ENCODE measurements at regions of chr16 and their contacts with region 1.

Region 1: DNA sequence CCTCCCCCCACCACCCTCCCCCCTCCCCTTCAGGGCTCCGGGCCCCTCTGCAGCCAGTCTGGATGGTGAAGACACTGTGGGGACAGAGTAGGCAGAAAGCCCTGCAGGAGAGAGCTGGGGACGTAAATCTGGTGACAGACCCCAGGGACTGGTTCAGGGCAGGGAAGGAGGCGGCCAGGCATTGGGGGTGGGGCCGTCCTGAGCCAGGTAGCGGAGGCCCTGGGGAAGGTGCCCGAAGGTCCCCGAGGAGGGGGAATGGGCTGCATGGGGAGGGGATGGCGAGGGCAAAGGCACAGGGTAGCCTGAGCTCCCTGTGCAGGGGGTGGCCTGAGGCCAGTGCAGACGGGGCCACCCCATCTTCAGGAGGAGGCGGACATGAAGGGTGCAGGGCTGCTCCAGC is 26.3 kb upstream of the CACNA1H start:
- DNase-seq: no peak

Region 2: GRCh38 chr16:1048442-1049112 is 78.0 kb before region 1 on chr16:
- intact Hi-C with region 1: no loop called
- DNase-seq: no peak

Region 3: GRCh38 chr16:1089822-1090619 is 36.6 kb before region 1 on chr16:
- intact Hi-C with region 1: loop called in 1 of 2 experiments (anchors 1 kb)
- DNase-seq: no peak